OCI-LY7 (cell line): ENCODE measurements at regions of chr7 and their contacts with region 1.

Region 1: GRCh38 chr7:137656227-137656849 is 190.4 kb downstream of the DGKI start:
- DNase-seq: peak; percentile 71
- H3K4me3 ChIP-seq: no peak overlapping the region
- H3K27ac ChIP-seq: no peak overlapping the region
- H3K4me1 ChIP-seq: no peaks in the 10 kb centered on the region
- CTCF ChIP-seq: peak; percentile 97

Region 2: DNA sequence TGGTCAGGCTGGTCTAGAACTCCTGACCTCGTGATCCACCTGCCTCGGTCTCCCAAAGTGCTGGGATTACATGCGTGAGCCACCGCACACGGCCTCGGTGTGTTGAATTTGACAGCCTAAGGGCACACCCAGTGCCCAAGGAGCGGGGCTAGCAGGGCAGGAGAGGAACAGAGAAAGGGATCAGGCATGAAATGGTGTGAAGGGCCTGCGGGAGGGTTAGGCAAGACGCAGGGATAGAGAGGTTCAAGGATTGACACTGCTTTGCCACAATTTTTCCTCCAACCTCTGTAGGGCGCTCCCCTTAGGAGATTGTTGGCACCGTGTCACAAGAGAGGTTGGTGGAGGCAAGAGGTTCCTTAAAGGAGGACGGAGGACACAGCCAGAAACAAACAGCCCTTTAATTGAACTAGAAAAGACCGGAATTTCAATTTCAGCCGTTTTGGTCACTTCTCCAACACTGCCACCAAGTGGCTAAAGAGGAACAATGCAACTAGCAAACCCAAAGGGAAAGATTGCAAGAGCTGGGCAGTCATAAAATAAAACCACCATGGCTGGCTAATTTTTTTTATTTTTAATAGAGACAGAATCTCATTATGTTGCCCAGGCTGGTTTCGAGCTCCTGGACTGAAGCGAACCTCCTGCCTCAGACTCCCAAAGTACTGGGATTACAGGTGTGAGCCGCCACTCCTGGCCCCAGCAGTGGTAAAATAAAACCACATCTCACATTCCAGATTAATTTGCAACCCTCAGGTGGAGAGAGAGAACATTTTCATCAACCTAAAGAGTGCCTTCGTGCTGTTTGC is 352.4 kb after region 1 on chr7:
- CTCF ChIA-PET with region 1: interaction called, 3 read pairs
- POLR2A ChIA-PET with region 1: interaction called, 3 read pairs
- intact Hi-C with region 1: loop called (anchors 1 kb)
- DNase-seq: peak; percentile 77
- H3K4me3 ChIP-seq: no peak overlapping the region
- H3K27ac ChIP-seq: no peak overlapping the region
- H3K4me1 ChIP-seq: no peaks in the 10 kb centered on the region
- CTCF ChIP-seq: peak; percentile 91